ENCODE measurements at regions of chr9 and their contacts with region 1.

Region 1: DNA sequence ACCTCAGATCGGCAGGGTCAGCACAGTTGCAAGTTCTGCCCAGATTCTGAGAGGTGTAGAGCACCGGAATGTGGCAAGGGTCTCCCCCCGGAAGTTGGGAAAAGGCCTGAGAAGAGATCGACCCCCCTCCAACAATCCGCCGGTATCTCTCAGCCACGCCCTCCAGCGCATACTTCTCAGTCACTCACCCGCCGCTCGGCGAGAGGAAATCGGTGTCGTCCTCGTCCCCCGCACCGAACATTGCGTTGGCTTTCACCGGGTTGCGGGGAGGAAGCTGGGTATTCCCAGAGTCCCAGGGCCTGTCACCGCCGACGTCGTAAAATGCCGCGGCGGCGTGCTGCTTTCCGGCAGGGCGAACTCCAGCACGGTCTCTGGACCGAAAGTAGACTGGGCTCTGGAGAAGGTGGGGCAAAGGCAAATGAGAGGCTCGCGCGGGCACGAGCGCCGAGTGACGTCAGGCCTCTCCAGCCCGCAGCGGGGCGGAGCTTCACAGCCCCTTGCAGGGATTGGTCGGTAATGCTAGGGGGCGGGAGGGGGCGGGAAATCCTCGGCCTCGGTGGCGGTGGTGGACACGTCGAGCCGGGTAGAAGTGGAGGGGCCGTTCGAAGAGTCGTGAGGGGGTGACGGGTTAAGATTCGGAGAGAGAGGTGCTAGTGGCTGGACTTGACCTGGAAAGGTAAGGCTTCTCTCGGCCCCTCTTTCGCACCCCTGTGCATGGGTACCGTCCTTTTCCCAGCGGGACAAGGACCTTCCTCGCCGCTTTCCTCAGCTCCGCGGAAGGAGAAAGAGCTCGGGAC is at the starts of genes FKBP15 and SLC31A1:
- DNase-seq: peak; percentile 98
- ATAC-seq: peak; percentile 97
- H3K4me3 Mint-ChIP-seq: peak within 1 kb of the TSS; percentile 89
- H3K27ac Mint-ChIP-seq: peak within 1 kb of the TSS; percentile 93
- H3K4me1 Mint-ChIP-seq: peaks cover 46% of the 10 kb centered on the region
- H3K27me3 Mint-ChIP-seq: no peaks in the 10 kb centered on the region
- total RNA-seq, gene FKBP15: 34.0 to 44.2 TPM
- total RNA-seq, gene SLC31A1: 14.8 to 18.2 TPM

Region 2: DNA sequence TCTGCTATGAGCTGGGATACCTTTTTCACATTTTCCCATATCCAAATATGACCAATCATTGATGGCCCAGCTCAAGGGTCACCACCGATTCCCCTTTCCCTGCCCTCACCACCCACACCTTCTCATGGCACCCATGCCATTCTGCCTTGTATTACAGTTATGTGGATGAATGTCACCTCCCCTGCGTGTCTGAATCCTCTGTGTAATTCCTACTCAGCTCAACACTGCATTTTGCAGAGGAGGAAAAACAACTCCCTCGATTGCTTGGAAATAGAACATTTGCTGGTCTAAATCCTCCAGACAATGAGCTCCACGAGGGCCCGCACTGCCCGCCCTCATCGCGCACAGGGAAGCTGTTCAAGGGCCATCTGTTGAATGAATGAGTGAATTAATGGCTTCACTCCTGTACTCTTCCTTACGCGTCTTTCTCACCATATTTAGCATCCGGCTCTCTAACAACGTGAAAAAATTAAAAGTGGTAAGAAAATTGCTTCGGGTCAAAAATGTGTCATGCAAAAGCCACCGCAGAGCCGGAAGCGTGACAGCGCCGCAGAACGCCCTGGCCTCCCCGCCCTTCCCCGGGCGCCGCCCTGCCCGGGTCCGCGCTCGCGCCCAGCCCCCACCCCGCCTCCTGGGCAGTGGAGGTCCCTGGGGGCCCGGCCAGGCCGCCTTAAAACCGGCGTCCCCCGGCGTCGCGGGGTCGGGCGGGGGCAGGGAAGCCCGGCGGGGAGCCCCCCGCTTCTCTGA is 1046.8 kb before region 1 on chr9:
- CTCF ChIA-PET with region 1: no interaction called
- POLR2A ChIA-PET with region 1: no interaction called
- intact Hi-C with region 1: loop called in 1 of 2 experiments (anchors 10 kb)
- DNase-seq: peak; percentile 87
- ATAC-seq: peak; percentile 87
- H3K4me3 Mint-ChIP-seq: peak overlapping the region; percentile 75
- H3K27ac Mint-ChIP-seq: peak overlapping the region; percentile 92
- H3K4me1 Mint-ChIP-seq: peaks cover 38% of the 10 kb centered on the region
- H3K27me3 Mint-ChIP-seq: peaks cover 11% of the 10 kb centered on the region

Region 3: DNA sequence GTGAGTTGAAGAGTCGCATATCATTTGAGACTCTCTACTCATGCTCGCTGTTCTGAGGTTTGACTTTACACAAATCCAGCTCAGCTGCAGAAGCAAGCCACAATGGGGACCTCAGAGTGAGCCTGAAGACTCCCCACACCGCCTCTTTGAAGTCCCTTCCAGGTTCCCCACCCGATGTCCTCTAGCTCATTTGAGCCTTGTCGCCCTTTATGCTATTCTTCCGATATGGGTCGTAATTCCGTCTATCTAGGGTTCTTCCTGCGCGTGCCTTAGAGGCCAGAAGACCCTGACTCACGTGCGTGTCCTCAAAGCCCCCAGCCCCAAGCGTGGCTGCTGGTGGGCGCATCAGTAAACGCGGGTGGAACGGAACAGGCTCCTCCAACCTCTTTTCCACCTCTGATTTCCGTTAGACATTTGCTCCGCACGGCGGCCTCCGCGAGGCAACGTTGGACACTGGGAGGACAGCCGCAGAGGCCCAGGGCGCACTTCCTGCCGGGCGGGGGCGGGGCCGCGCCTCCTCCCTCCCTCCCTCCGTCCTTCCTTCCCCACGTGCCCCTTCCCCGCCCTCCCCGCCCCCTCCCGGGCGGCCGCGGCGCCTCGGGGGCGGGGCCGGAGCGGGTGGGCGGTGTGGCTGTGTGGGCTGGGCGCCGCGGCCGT is 471.0 kb before region 1 on chr9 and contains the start of gene SNX30:
- CTCF ChIA-PET with region 1: no interaction called
- POLR2A ChIA-PET with region 1: no interaction called
- intact Hi-C with region 1: no loop called
- DNase-seq: peak; percentile 83
- ATAC-seq: peak; percentile 45
- H3K4me3 Mint-ChIP-seq: peak within 1 kb of the TSS; percentile 83
- H3K27ac Mint-ChIP-seq: peak within 1 kb of the TSS; percentile 91
- H3K4me1 Mint-ChIP-seq: peaks cover 63% of the 10 kb centered on the region
- H3K27me3 Mint-ChIP-seq: no peaks in the 10 kb centered on the region
- total RNA-seq, gene SNX30: 4.2 to 4.6 TPM

Region 4: DNA sequence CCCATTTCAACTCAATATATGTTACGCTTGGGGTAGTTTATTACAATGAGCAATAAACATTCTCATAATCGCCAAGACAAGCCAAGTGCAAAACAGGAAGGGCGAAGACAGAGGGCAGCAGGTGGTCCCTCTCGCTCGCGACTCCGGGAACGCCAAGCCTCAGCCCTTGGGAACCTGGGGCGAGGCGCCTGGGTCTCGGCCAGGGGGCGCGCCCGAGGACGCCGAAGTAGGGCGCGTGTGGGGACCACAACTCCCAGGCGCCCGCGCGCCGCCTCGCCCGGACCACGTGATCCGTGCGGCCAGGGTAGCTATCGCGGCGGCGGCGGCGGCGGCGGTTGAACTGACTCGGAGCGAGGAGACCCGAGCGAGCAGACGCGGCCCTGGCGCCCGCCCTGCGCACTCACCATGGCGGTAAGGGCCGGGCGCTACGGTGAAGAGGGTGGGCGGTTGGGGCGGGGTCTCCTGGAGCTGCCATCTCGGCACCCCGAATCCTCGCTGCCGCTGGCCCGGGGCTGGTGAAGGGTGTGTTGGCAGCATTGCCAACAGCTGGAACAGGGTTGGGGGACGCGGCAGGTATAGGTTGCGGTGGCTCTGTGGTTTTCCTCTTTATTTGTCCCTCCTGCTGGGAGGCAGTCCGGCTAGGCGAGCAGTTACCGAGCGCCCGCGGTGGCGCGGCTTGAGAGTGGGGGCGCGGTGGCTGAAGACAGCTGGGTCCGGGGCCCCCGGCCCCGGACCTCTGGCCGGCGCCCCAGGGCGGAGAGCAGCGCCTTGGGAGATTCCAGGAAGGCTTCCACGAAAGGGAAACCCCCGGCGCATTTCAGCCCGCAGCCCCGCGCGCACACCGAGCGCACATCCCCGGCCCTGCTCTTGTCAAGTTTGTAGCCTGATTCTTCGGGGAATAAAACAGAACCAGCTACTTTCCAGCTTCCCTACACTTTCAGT is 70.3 kb before region 1 on chr9 and contains the start of gene SLC31A2:
- CTCF ChIA-PET with region 1: interaction called, 5 read pairs
- POLR2A ChIA-PET with region 1: interaction called, 4 read pairs
- intact Hi-C with region 1: loop called (anchors 1 to 2 kb)
- DNase-seq: peak; percentile 95
- ATAC-seq: peak; percentile 97
- H3K4me3 Mint-ChIP-seq: peak within 1 kb of the TSS; percentile 73
- H3K27ac Mint-ChIP-seq: peak within 1 kb of the TSS; percentile 51
- H3K4me1 Mint-ChIP-seq: peaks cover 29% of the 10 kb centered on the region
- H3K27me3 Mint-ChIP-seq: peaks cover 2% of the 10 kb centered on the region
- total RNA-seq, gene SLC31A2: 2.7 to 3.2 TPM

Region 5: DNA sequence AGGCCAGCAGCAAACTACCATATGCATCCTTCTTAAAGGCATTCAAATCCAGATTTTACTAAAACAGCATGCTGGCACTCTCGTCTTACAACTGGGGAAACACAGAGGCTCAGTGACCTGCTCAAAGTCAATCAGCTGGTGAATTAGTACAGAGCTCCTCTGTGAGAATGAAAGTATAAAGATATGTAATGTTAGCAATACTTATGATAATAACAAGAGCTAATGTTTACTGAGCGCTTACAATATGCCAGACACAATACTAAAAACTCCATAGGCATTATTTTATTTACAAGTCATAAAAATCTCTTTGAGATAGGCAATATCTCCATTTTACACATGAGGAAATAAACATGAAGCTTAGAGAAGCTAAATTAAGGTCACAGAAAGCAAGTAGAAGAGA is 28.7 kb before region 1 on chr9:
- CTCF ChIA-PET with region 1: no interaction called
- POLR2A ChIA-PET with region 1: no interaction called
- intact Hi-C with region 1: no loop called
- DNase-seq: no peak
- ATAC-seq: no peak
- H3K4me3 Mint-ChIP-seq: no peak overlapping the region
- H3K27ac Mint-ChIP-seq: no peak overlapping the region
- H3K4me1 Mint-ChIP-seq: no peaks in the 10 kb centered on the region
- H3K27me3 Mint-ChIP-seq: no peaks in the 10 kb centered on the region

Region 6: DNA sequence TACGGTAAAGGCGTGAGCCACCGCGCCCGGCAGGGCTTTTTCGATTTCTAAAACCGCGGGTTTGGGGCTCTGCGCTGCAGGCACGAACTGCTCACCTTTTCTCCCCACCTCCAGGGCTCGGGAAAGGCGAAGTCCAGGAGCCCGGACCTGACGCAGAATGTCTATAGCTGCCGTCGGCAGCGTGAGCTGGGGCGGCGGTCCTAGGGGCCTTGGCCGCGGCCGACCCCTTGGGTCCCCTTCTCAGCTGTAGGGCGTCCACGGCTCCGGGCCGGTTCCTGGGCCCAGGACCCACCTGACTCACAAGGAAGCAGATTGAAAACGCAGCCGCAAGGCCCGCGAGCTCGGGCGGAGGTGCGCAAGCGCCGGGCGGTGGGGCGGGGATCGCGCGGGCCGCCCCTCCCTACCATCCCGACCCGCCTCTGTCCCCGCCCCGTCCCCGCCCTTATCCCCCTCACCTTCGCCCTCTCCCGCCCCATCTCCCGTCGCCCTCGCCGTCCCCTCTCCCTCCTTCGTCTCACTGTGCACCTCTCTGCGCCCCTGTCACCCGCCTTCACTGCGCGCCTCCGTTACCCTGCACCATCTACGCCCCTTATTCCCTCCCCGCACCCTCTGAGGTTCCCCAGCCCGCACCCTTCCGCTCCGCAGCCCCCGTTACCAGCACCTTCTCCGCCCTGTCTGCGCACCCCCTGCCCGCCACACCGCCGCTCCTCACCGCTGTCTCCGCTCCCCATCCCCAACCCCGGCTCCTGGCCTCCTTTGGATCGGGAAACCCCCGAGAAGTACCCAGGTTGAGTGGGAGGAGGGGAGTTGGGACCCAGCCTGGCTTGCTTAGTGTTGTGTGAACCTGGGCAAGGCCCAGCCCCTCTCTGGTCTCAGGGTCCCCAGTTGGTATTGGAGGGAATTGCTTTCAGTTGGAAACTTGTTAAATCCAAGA is 155.7 kb after region 1 on chr9 and contains the start of gene HDHD3:
- CTCF ChIA-PET with region 1: no interaction called
- POLR2A ChIA-PET with region 1: no interaction called
- intact Hi-C with region 1: loop called in 1 of 2 experiments (anchors 1 kb)
- DNase-seq: peak; percentile 90
- ATAC-seq: peak; percentile 89
- H3K4me3 Mint-ChIP-seq: peak within 1 kb of the TSS; percentile 88
- H3K27ac Mint-ChIP-seq: peak within 1 kb of the TSS; percentile 89
- H3K4me1 Mint-ChIP-seq: peaks cover 17% of the 10 kb centered on the region
- H3K27me3 Mint-ChIP-seq: no peaks in the 10 kb centered on the region
- total RNA-seq, gene HDHD3: 12.7 to 16.5 TPM

Region 7: DNA sequence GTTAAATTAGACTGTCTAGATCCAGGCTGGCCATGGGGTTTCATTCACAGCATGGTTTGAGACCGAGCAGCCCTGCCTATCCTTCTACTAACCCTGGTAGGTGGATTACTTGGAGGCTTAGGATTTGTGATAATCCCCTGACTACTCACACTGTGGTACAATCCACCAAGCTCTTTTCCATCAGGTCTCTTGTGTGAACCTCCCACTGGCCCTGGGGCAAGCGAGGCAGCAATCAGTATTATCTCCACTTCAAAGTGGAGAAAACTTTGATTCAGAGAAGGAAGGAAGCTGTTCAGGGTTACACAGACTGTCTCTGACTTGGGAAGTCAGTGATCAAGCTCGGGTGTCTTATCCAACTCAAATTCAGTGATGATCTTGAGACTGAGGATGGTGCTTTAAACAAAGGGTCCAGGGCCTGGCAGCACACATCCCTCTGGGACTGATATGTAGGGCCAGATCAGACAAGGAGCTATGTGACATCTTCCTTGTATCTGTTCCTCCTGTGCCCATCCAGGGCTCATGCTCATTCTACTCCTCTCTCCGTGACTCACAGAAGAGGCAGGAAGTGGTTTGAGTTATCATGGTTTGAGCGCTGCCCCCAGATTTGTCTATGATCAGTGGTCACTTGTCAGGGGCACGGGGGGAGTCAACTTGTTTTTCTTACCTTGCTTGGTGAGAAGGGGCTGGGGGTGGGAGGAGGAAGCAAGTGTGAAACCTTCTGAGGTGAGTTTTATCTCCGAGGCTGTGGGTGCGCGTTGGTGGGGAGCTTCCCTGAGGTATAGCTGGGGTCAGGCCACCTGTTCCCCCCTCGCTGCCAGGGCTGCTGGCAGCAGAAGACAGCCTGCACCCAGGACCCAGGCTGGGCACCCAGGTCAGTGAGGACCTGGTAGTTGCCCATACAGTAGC is 290.9 kb after region 1 on chr9:
- CTCF ChIA-PET with region 1: no interaction called
- POLR2A ChIA-PET with region 1: no interaction called
- intact Hi-C with region 1: loop called in 1 of 2 experiments (anchors 5 kb)
- DNase-seq: peak; percentile 84
- ATAC-seq: peak; percentile 72
- H3K4me3 Mint-ChIP-seq: peak overlapping the region; percentile 57
- H3K27ac Mint-ChIP-seq: peak overlapping the region; percentile 93
- H3K4me1 Mint-ChIP-seq: peaks cover 58% of the 10 kb centered on the region
- H3K27me3 Mint-ChIP-seq: no peaks in the 10 kb centered on the region

Measured in activated CD4-positive, alpha-beta T cell treated with anti-CD3 and anti-CD28 coated beads for 36 hours (primary cell).